Gastrocnemius medialis (tissue), 4 donors: ENCODE measurements at regions of chr2 and their contacts with region 1.

Region 1: DNA sequence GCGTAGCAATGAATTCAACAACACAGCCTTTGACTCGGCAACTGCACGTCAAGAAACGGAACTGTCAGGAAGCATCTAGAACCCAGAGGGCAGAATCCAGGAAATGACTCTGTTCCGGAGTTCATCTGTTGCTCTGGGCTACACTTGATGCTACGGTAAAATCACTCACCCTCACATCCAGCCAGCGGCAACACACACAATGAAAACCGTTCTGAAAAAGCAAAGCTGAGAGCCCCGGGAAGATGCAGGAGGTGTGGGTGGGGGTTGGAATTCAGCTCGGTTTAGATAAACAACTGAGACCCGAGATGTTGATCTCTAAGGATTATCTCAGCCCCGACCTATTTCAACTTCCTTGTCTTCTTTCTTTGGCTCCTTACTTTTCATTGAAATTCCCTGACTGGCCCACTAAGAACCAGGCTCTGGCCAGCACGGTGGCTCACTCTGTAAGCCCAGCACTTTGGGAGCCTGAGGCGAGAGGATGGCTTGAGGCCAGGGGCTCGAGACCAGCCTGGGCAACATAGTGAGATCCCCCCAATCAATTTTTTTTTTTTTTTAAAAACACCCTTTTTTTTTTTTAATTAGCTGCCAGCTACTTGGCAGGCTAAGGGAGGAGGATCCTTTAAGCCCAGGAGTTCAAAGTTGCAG is 13.3 kb upstream of the RAB17 start:
- DNase-seq: no peak
- ATAC-seq: no peak
- H3K4me3 ChIP-seq: peak overlapping the region in 1 of 4 donors; percentile 5
- H3K27ac ChIP-seq: peak overlapping the region in 2 of 4 donors; percentile 46 to 57
- H3K4me1 ChIP-seq: peaks cover 16 to 18% of the 10 kb centered on the region in 2 donors
- H3K27me3 ChIP-seq: no peaks in the 10 kb centered on the region
- CTCF ChIP-seq: no peak
- POLR2A ChIP-seq: peak in 1 of 2 donors; percentile 51

Region 2: DNA sequence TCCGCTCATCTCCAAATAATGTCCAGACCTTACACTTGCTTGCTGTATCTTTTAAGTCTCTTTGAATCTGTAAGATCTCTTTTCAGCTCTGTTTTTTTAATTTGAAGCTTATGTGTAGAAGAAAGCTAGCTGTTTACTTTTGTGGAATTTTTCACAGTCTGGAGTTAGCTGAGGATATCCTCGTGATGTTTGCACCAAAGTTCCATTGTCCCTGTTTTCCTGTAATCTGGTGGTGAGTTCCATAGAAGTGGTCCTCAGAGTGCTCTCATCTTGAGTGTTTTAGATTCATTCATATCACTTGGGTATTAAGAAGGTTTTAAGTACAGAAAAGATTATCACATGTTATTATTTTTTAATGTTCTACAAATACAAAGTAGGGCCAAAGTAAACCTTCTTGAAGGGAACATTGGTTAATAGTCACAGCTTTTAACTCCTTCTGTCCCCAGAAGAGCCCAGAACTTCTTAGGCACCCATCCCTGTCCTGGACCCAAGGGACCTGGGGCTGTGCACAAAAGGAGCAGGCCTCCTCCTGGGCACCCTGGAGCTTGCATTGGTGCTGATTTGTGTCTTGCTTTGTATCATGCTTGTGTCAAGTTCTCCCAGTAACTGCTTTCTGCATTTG is 101.8 kb before region 1 on chr2:
- in situ Hi-C with region 1: no loop called
- intact Hi-C with region 1: no loop called
- DNase-seq: no peak
- ATAC-seq: peak in 1 of 2 donors; percentile 40
- H3K4me3 ChIP-seq: no peak overlapping the region
- H3K27ac ChIP-seq: peak overlapping the region in 2 of 4 donors; percentile 10 to 31
- H3K4me1 ChIP-seq: peaks cover 0 to 5% of the 10 kb centered on the region in 2 donors
- H3K27me3 ChIP-seq: no peaks in the 10 kb centered on the region
- CTCF ChIP-seq: no peak
- POLR2A ChIP-seq: no peak

Region 3: DNA sequence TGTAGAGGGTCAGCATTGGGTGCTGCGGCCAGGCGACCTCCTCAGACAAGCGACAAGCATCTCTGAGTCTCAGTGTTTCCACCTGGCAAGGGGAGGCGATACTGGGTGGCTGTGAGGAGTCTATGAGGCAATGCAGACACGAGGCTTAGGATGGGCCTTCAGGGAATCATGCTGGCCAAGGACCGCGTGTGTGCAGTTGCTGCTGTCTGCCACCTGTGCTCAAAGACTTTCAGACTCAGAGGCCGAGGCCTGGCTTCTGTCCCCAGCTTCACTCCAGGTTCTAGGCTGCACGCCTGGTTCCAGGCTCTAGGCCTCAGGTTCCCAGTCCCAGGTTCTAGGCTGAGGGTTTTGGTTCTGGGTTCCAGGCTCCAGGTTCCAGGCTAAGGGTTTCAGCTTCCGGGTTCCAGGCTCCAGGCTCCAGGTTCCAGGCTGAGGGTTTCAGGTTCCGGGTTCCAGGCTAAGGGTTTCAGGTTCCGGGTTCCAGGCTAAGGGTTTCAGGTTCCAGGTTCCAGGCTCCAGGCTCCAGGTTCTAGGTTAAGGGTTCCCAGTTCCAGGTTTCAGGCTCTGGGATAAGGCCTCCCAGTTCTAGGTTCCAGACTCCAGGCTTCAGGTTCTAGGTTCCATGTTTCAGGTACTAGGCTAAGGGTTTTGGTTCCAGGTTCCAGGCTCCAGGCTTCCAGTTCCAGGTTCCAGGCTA is 38.3 kb after region 1 on chr2:
- in situ Hi-C with region 1: no loop called
- intact Hi-C with region 1: loop called (anchors 2 kb)
- DNase-seq: peak; percentile 79 to 94
- ATAC-seq: peak; percentile 48 to 50
- H3K4me3 ChIP-seq: no peak overlapping the region
- H3K27ac ChIP-seq: peak overlapping the region; percentile 88 to 96 (median 94)
- H3K4me1 ChIP-seq: peaks cover 77 to 89% of the 10 kb centered on the region in 2 donors
- H3K27me3 ChIP-seq: no peaks in the 10 kb centered on the region
- CTCF ChIP-seq: no peak
- POLR2A ChIP-seq: peak in 1 of 2 donors; percentile 26

Region 4: GRCh38 chr2:237650455-237650850 is 46.6 kb after region 1 on chr2:
- in situ Hi-C with region 1: loop called in 1 of 4 experiments (anchors 10 kb)
- intact Hi-C with region 1: loop called (anchors 2 kb)
- DNase-seq: no peak
- ATAC-seq: peak in 1 of 2 donors; percentile 25
- H3K4me3 ChIP-seq: no peak overlapping the region
- H3K27ac ChIP-seq: peak overlapping the region; percentile 66 to 94 (median 90)
- H3K4me1 ChIP-seq: peaks cover 40 to 69% of the 10 kb centered on the region in 2 donors
- H3K27me3 ChIP-seq: no peaks in the 10 kb centered on the region
- CTCF ChIP-seq: no peak
- POLR2A ChIP-seq: no peak

Region 5: DNA sequence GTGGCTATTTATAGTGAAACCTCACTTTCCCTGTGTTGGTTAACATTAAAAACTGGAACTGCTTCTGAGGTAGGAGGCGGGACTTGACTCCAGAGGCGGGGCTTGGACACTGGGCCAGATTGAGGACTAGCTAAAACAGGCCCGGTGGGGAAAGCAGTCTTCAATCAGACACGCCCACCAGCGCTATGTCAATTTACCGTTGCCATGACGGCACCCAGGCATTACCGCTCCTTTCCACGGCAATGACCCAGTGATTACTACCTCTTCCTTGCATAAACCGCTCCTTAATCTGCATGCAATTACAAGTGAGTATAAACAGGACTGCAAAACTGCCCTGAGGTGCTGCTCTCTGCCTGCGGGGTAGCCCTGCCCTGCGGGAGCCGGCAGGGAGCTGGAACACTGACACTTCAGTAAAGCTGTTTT is 58.8 kb after region 1 on chr2:
- in situ Hi-C with region 1: loop called in 1 of 4 experiments (anchors 10 kb)
- intact Hi-C with region 1: loop called (anchors 2 kb)
- DNase-seq: peak; percentile 84 to 92
- ATAC-seq: peak; percentile 88 to 93
- H3K4me3 ChIP-seq: peak overlapping the region in 2 of 4 donors; percentile 0 to 23
- H3K27ac ChIP-seq: peak overlapping the region; percentile 75 to 88 (median 84)
- H3K4me1 ChIP-seq: peaks cover 32 to 36% of the 10 kb centered on the region in 2 donors
- H3K27me3 ChIP-seq: no peaks in the 10 kb centered on the region
- CTCF ChIP-seq: peak in 1 of 5 experiments; percentile 18
- POLR2A ChIP-seq: no peak

Region 6: GRCh38 chr2:237791977-237792727 is 188.3 kb after region 1 on chr2:
- in situ Hi-C with region 1: no loop called
- intact Hi-C with region 1: no loop called
- DNase-seq: no peak
- ATAC-seq: no peak
- H3K4me3 ChIP-seq: no peak overlapping the region
- H3K27ac ChIP-seq: no peak overlapping the region
- H3K4me1 ChIP-seq: no peaks in the 10 kb centered on the region
- H3K27me3 ChIP-seq: no peaks in the 10 kb centered on the region
- CTCF ChIP-seq: no peak
- POLR2A ChIP-seq: no peak

Region 7: DNA sequence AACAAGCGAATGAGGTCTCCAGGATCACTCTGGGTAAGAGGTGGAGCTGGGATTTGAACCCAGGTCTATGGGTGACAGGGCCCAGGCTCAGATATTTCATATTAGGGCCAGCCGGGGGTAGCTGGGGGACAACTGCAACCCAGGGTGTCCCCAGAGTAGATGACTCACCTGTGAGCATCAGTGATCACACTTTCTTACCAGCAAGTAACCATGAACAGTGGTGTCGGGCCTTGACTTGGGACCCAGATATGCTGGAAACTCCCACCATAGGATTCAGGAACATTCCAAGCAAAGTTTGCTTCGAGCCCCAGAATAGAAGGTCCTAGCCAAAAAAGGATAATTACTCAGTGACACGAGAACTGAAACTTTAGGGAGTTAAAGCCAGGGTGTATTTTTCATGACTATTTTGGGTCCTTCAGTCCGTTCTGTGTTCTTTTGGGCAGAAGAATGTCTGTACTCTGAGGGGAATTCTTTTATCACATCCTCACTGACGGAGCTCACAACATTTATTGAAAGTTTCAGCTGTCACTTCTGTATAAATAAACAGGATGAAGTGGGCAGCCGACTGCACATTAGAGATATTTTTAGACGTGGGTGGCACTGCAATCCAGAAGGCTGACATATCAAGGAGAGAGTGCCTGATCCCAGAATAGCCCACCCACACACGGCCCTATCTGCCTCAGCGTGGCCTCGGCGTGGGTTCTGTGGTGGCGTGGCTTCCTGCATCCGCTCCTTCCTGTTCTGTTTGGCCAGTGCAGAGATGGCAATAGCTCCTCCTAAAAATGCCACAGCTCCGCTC is 301.2 kb after region 1 on chr2:
- in situ Hi-C with region 1: no loop called
- intact Hi-C with region 1: no loop called
- DNase-seq: peak; percentile 61 to 81
- ATAC-seq: peak; percentile 96
- H3K4me3 ChIP-seq: peak overlapping the region; percentile 15 to 29 (median 20)
- H3K27ac ChIP-seq: peak overlapping the region; percentile 85 to 99 (median 98)
- H3K4me1 ChIP-seq: peaks cover 12 to 20% of the 10 kb centered on the region in 2 donors
- H3K27me3 ChIP-seq: no peaks in the 10 kb centered on the region
- CTCF ChIP-seq: peak in 2 of 5 experiments; percentile 7 to 18
- POLR2A ChIP-seq: peak; percentile 69